ENCODE measurements at regions of chr9 and their contacts with region 1.

Region 1: GRCh38 chr9:107489687-107490605 is at the start of gene KLF4:
- DNase-seq: peak; percentile 92 to 99
- H3K4me3 ChIP-seq: peak within 1 kb of the TSS; percentile 90
- CTCF ChIP-seq: no peak
- POLR2A ChIP-seq: peak in 1 of 2 donors; percentile 79
- total RNA-seq, gene KLF4: 562 to 846 (median 608) TPM

Region 2: DNA sequence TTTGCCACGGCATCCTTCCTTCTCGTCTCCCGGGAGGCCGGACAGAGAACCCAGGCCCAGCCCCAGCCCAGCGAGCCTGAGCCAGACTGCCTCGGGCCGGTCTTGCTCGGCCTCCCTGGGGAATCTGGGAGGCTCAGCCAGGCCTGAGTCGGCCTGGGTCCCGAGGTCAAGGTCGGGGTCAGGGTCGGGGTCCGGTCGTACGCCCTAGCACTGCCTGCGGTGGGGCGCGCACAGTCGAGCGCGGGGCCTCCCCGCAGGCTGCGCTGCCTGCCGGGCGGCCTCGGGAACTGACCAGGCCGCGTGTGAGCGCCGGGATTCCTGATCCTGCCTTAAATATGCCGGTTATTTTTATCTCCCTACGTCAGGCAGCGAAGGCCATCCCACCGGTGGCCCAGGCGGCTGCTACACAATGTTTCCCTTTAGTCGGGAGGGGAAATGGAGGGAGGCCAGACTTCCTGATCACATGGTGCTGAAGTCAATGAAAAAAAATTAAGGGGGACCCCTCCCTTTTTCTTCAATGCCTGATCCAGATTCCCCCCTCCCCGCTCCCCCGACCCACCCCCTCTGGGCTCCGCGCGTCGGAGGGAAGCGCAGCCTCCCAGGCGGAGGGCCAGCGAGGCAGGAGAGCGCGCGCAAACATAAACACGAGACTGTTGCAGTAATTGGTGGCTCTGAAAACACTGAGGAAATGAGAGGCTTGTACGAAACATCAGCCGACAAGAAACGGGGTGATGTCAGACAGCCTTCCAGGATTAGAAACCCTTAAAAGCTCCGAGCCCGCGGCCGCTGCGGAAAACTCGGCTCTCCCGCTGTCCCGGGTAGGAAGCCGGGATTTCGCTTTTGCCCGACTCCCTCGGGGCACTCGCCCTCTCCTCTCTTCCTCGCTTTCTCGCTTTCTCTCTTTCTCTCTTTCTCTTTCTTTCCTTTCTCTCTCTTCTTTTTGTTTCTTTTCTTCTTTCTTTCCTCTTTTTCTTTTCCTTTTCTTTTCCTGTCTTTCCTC is 147.8 kb after region 1 on chr9:
- intact Hi-C with region 1: loop called (anchors 2 kb)
- DNase-seq: peak; percentile 95 to 98
- H3K4me3 ChIP-seq: no peak overlapping the region
- CTCF ChIP-seq: no peak
- POLR2A ChIP-seq: peak in 1 of 2 donors; percentile 95

Region 3: DNA sequence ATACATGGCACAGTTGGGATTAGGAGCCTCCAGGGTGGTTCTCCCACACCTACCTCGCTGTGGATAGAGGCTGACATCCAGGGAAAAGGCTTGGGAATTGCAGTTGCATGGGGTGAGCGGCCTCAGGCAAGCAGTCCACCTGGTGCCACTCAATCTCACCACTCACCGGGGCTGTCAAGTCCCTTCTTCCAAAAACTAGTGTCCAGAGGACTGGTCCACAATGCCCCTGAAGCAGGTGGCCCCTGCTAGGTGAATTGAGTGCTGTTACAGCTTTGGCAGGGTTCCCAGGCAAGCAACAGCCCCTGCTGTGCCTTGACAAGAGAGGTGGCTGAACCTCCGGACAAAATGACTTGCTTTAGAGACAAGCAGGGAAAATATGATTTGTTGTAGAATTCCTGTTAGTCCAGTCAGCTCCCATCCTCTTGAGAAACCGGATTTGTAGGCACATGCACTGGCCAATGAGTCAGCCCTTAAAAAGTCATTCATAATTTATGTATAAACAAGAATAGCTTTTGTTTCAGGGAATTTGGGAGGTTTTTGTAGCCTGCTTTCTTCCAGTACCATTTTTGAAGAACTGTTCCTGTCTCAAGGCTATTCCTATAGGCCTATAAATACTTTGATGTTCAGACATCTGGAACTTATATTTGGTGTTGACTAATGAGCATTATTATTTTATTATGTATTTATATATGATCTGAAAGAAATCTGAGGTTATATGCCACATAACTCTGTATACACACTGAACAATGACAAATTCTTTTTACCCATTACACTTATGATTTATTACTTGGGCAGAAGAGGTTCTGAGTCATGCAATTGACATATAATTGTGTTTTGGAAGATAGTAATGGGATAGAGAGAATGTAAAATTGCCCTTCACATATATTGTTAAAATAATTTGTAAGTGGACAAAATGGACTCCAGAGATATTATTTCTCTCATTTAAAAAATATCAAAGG is 954.7 kb after region 1 on chr9:
- intact Hi-C with region 1: loop called (anchors 5 kb)
- DNase-seq: peak; percentile 63 to 88
- H3K4me3 ChIP-seq: peak overlapping the region; percentile 19
- CTCF ChIP-seq: no peak
- POLR2A ChIP-seq: no peak

Region 4: DNA sequence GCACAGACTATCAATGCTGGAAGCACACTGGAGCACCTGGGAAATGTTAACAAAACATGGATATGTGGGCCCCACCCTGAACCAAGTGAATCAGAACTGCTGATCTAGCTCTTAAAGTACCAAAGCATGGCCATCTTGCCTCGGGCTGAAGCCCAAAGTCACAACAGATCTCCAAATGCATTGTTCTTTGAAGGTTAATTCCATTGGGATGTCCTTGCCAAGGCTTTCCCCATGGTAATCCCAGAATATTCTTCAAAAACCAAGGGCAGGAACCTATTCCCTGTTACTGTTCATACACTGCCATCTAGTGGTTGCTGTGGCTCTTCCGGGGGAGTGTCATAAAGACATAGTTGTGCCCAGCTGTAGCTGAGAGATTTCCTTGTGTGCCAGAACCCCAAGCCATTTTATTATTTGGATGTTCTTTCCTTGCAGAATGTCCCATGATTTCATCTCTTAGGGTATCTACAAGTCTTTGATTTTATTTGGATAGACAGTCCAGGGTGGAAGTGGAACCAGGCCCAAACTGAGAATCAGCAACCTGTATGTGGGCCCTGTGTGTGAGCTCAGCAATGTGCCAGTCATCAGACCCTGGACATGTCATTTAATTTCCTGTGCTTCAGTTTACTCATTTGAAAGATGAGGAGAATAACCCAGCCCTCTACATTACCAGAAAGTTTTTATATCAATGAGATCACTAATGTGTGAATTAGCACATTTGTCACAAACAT is 1075.9 kb after region 1 on chr9:
- intact Hi-C with region 1: loop called (anchors 5 kb)
- DNase-seq: peak in 1 of 2 donors; percentile 70
- H3K4me3 ChIP-seq: no peak overlapping the region
- CTCF ChIP-seq: peak in 1 of 3 donors; percentile 30
- POLR2A ChIP-seq: no peak